ENCODE measurements at regions of chr5 and their contacts with region 1.

Region 1: DNA sequence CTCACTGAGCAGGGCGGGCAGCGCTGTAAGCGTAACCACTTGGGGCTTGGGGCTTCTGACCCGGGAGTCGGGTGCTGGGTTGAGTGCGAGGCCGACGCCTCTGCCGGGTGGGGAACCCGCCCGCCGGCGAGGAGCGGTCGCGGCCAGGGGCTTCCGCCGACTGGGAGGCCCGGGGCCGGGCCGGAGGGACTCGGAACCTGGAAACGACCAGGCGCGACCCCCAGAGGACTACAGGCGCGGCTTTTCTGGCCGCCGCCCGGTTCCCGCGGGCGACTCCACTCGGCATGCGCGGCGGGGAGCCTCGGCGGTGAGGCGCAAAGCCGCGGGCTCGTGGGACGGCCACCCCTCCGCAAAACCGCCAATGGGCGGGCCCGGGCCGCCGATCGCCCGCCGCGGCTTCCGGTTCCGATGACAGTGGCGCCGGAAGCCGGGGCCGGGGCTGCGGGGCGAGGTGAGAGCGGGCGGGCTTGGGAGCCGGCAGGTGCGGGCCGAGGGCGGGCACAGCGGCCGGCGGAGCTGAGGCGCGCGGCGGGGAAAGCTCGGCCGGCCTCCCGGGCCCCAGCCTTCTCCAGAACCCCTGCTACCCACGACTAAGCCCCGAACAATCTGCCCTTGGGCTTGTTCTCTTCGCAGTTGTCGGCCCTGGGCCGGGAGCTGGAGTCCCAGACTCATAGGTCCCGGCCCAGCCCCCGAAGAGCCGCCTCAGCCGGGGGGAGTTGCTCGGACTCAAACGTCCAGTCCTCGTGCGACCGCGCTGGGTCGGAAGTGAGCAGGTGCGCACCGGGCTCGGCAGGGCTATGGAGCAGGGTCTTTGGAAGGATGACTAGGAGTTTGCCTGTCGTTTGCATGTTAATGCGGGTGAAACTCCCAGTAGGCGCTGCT is at the start of gene RMND5B:
- DNase-seq: peak; percentile 78
- ATAC-seq: peak; percentile 42
- H3K4me3 Mint-ChIP-seq: peak within 1 kb of the TSS; percentile 78
- H3K27ac Mint-ChIP-seq: peak within 1 kb of the TSS; percentile 97
- H3K4me1 Mint-ChIP-seq: peaks cover 64% of the 10 kb centered on the region
- H3K27me3 Mint-ChIP-seq: no peaks in the 10 kb centered on the region
- CTCF ChIP-seq: no peak
- total RNA-seq, gene RMND5B: 86.1 to 93.3 TPM (median 92.5 TPM) in 3 replicates

Region 2: DNA sequence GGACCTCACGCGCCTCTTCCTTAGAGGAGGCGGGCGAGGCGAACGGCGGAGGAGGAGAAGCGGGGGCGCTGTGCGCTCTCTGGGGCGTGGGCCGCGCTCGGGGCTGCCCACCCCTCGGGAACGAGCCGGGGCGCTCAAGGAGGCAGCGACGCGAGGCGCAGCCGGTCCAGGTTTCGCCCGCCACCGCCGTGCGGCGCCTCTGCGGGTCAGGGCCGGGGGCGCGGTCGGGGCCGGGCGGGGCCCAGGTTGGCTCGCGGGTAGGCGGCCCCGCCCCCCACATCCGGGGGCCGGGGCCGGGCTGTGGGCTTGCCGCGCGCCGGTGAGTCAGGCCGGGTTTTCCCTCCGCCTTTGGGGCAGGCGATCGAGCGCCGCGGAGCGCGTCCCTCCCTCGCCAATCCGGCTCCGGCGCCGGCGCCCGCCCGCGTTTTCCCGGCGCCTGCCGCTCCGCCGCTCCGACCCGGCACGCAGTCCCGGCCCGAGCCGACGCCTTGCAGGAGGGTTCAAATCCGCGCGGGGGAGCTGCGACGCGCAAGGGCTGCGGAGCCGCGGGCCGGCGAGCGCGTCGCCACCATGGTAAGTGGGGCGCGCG is 17.6 kb before region 1 on chr5 and contains the start of gene N4BP3:
- CTCF ChIA-PET with region 1: interaction called, 34 read pairs
- POLR2A ChIA-PET with region 1: interaction called, 60 read pairs
- DNase-seq: peak; percentile 86
- ATAC-seq: peak; percentile 57
- H3K4me3 Mint-ChIP-seq: peak within 1 kb of the TSS; percentile 99
- H3K27ac Mint-ChIP-seq: peak within 1 kb of the TSS; percentile 98
- H3K4me1 Mint-ChIP-seq: peaks cover 41% of the 10 kb centered on the region
- H3K27me3 Mint-ChIP-seq: no peaks in the 10 kb centered on the region
- CTCF ChIP-seq: no peak
- total RNA-seq, gene N4BP3: 40.3 to 46.2 TPM (median 41.6 TPM) in 3 replicates

Region 3: GRCh38 chr5:178186427-178186826 is 55.6 kb after region 1 on chr5:
- CTCF ChIA-PET with region 1: no interaction called
- POLR2A ChIA-PET with region 1: no interaction called
- DNase-seq: no peak
- ATAC-seq: no peak
- H3K4me3 Mint-ChIP-seq: no peak overlapping the region
- H3K27ac Mint-ChIP-seq: no peak overlapping the region
- H3K4me1 Mint-ChIP-seq: peaks cover 13% of the 10 kb centered on the region
- H3K27me3 Mint-ChIP-seq: peaks cover 3% of the 10 kb centered on the region; the same call in 1 of the 2 replicates
- CTCF ChIP-seq: no peak

Region 4: DNA sequence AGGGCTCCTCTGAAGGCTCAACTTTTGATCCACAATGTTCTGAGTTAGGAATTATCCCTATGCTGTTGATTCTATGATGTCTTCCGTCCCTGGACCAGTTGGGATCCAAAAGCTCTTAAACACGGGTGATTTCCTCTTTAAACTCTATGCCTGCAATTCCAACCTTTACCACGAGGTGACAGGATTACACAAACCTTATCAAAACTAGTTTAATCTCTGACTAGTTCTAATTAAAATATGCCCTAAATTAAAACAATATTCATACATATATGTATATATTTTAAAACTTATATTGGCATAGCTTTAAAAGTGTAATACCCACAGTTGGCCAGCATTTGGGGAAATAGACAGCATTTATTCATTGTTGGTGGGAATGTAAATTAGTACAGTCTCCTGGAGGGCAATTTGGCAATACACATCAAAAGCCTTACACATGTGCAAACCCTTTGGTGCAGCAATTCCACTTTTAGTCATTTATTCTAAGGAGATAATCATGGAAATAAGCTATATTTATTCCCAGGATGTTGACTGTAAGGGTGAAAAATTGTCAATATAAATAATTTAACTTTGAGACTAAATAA is 153.3 kb after region 1 on chr5:
- CTCF ChIA-PET with region 1: no interaction called
- POLR2A ChIA-PET with region 1: no interaction called
- DNase-seq: no peak
- ATAC-seq: no peak
- H3K4me3 Mint-ChIP-seq: no peak overlapping the region
- H3K27ac Mint-ChIP-seq: no peak overlapping the region
- H3K4me1 Mint-ChIP-seq: peaks cover 4% of the 10 kb centered on the region
- H3K27me3 Mint-ChIP-seq: 0 out of 2 replicates have a peak, but pooled peaks cover 4% of the 10 kb centered on the region
- CTCF ChIP-seq: peak; percentile 63; the same call in 1 of the 2 replicates